ENCODE measurements at regions of chr2 and their contacts with region 1.

Region 1: GRCh38 chr2:88669371-88670214 is 21.9 kb upstream of the RPIA start:
- DNase-seq: peak; percentile 30
- H3K4me3 Mint-ChIP-seq: no peak overlapping the region
- H3K27ac Mint-ChIP-seq: no peak overlapping the region
- H3K4me1 Mint-ChIP-seq: no peaks in the 10 kb centered on the region
- H3K27me3 Mint-ChIP-seq: no peaks in the 10 kb centered on the region

Region 2: GRCh38 chr2:88187038-88187676 is 482.4 kb before region 1 on chr2:
- CTCF ChIA-PET with region 1: no interaction called
- POLR2A ChIA-PET with region 1: no interaction called
- intact Hi-C with region 1: loop called (anchors 10 kb)
- DNase-seq: peak; percentile 61
- H3K4me3 Mint-ChIP-seq: no peak overlapping the region
- H3K27ac Mint-ChIP-seq: no peak overlapping the region
- H3K4me1 Mint-ChIP-seq: peaks cover 1% of the 10 kb centered on the region
- H3K27me3 Mint-ChIP-seq: peaks cover 11% of the 10 kb centered on the region

Region 3: GRCh38 chr2:88590998-88591613 is 78.5 kb before region 1 on chr2:
- CTCF ChIA-PET with region 1: interaction called, 175 read pairs
- POLR2A ChIA-PET with region 1: no interaction called
- intact Hi-C with region 1: loop called (anchors 1 kb)
- DNase-seq: peak; percentile 37
- H3K4me3 Mint-ChIP-seq: no peak overlapping the region
- H3K27ac Mint-ChIP-seq: no peak overlapping the region
- H3K4me1 Mint-ChIP-seq: peaks cover 4% of the 10 kb centered on the region
- H3K27me3 Mint-ChIP-seq: no peaks in the 10 kb centered on the region

Region 4: DNA sequence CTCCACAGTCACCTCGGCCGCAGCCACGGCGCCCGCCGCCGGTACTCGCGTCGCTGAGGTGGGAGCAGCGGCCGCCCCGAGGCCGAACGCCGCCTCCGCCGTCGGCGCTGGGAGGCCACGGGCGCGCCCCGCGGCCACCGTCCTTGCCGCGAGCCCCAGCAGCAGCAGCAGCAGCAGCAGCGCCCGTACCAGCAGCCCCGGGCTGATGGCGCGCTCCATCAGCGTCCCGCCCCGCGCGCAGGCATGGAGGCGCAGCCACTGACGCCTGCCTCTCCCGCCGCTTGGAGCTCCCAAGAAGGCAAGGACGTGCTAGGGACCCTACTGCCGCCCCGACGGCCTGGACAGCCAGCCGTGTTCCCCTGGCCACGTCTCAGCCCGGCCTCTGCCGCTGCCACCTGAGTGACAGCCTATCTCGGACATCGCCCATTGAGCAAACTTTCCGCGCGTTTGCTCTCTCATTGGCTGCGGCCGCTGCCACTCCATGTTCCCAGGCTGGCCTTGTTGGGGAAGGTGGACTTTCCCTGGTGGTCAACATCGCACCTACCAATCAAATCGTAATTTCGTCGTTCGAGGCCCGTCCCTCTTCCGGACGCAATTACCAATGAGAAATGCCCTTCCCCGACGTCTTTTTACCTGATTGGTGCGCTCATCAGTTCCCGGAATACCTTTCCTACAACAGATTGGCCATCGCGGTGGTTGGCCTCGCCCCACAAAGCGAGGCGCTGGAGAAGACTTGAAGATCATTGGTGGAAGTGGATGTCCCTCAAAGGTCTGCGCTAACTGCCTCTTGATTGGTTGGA is 42.3 kb before region 1 on chr2 and contains the start of gene EIF2AK3:
- CTCF ChIA-PET with region 1: interaction called, 11 read pairs
- POLR2A ChIA-PET with region 1: no interaction called
- intact Hi-C with region 1: loop called (anchors 5 kb)
- DNase-seq: peak; percentile 96
- H3K4me3 Mint-ChIP-seq: no peak within 1 kb of the TSS
- H3K27ac Mint-ChIP-seq: peak within 1 kb of the TSS; percentile 88
- H3K4me1 Mint-ChIP-seq: peaks cover 21% of the 10 kb centered on the region
- H3K27me3 Mint-ChIP-seq: no peaks in the 10 kb centered on the region
- total RNA-seq, gene EIF2AK3: 14.2 to 15.5 TPM

Region 5: DNA sequence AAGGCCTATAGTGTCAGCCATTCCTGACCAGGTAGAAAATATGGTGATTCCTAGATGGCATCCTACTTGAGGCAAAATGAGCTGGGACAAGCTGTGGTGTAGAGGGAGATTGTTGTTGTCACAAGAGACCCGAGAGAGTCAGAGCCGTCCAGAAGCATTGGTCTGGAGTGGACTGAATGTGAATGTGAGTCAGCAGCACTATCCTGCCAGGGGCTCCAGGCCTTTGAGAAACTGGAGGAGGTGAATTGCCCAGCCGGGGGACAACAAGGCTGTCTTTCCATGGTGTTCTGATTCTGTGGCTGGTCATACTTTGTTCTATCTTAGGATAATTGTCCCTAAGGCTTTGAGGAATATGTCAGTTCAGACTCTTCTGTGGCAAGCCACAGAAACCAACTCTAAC is 12.9 kb before region 1 on chr2:
- CTCF ChIA-PET with region 1: interaction called, 10 read pairs
- POLR2A ChIA-PET with region 1: no interaction called
- intact Hi-C with region 1: no loop called
- DNase-seq: no peak
- H3K4me3 Mint-ChIP-seq: no peak overlapping the region
- H3K27ac Mint-ChIP-seq: no peak overlapping the region
- H3K4me1 Mint-ChIP-seq: no peaks in the 10 kb centered on the region
- H3K27me3 Mint-ChIP-seq: no peaks in the 10 kb centered on the region

Region 6: DNA sequence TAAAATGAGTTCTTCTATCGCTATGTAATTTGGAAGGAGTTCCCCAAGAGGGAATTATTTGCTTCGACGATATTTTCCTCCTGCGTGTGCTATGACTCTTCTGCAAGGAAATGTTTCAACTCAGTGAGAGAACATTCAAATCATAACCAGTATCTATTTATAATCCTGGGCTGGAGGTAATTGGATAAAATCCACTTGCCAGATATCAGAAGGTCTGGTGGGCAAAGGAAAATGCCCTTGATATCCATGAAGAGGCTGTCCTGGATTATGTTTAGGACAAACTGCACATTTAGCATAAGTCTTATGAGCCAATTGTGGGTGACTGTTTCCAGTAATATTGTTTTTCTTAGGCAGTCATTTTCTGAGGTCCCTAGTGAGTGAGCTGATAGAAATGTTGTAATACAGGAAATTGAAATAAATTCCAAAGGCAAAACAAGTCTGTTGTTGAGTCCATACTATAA is 39.6 kb after region 1 on chr2:
- CTCF ChIA-PET with region 1: no interaction called
- POLR2A ChIA-PET with region 1: no interaction called
- intact Hi-C with region 1: no loop called
- DNase-seq: no peak
- H3K4me3 Mint-ChIP-seq: no peak overlapping the region
- H3K27ac Mint-ChIP-seq: no peak overlapping the region
- H3K4me1 Mint-ChIP-seq: no peaks in the 10 kb centered on the region
- H3K27me3 Mint-ChIP-seq: no peaks in the 10 kb centered on the region

Region 7: DNA sequence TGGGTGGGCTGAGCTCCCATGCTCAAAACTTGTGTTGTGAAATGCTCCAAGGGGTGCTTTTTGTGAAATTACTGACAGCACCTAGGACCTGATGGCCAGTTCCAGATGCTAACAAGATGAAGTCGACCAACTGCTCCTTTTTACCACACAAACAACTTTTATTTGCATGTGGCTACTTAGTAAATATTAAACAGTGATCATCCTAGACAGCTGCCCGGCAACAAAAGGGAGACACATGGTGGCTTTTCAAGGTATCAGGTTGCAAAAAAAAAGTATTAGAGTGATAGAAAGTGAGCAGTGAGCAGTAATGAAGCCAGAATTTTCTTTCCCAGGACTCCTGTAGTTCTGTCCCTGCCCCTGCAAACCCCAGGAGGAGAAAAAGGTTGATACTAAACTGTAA is 140.4 kb after region 1 on chr2:
- CTCF ChIA-PET with region 1: no interaction called
- POLR2A ChIA-PET with region 1: no interaction called
- intact Hi-C with region 1: no loop called
- DNase-seq: no peak
- H3K4me3 Mint-ChIP-seq: no peak overlapping the region
- H3K27ac Mint-ChIP-seq: no peak overlapping the region
- H3K4me1 Mint-ChIP-seq: no peaks in the 10 kb centered on the region
- H3K27me3 Mint-ChIP-seq: peaks cover 11% of the 10 kb centered on the region

Region 8: GRCh38 chr2:88828397-88829137 is 159.0 kb after region 1 on chr2:
- CTCF ChIA-PET with region 1: no interaction called
- POLR2A ChIA-PET with region 1: no interaction called
- intact Hi-C with region 1: no loop called
- DNase-seq: no peak
- H3K4me3 Mint-ChIP-seq: no peak overlapping the region
- H3K27ac Mint-ChIP-seq: no peak overlapping the region
- H3K4me1 Mint-ChIP-seq: no peaks in the 10 kb centered on the region
- H3K27me3 Mint-ChIP-seq: peaks cover 5% of the 10 kb centered on the region

Measured in activated CD4-positive, alpha-beta memory T cell treated with anti-CD3 and anti-CD28 coated beads for 36 hours (primary cell).